CD4-positive, alpha-beta memory T cell (primary cell): ENCODE measurements at regions of chr7 and their contacts with region 1.

Region 1: GRCh38 chr7:129611246-129612111 is at the start of gene NRF1:
- DNase-seq: peak; percentile 90 to 93 (median 93)
- H3K4me3 ChIP-seq: peak within 1 kb of the TSS; percentile 95 to 98
- H3K4me3 Mint-ChIP-seq: peak within 1 kb of the TSS; percentile 94 to 99 (median 98)
- H3K27ac ChIP-seq: peak within 1 kb of the TSS; percentile 79
- H3K27ac Mint-ChIP-seq: peak within 1 kb of the TSS; percentile 92 to 98 (median 97)
- H3K4me1 ChIP-seq: peaks cover 45% of the 10 kb centered on the region
- H3K4me1 Mint-ChIP-seq: peaks cover 38 to 69% (median 55%) of the 10 kb centered on the region in 4 donors
- H3K27me3 ChIP-seq: no peaks in the 10 kb centered on the region
- H3K27me3 Mint-ChIP-seq: no peaks in the 10 kb centered on the region
- total RNA-seq, gene NRF1: 38.1 to 40.0 TPM

Region 2: GRCh38 chr7:129433847-129434674 is 177.4 kb before region 1 on chr7 and contains the start of gene STRIP2:
- CTCF ChIA-PET with region 1: no interaction called
- POLR2A ChIA-PET with region 1: interaction called, 3 read pairs
- intact Hi-C with region 1: loop called (anchors 5 kb)
- DNase-seq: peak; percentile 84 to 90 (median 87)
- H3K4me3 ChIP-seq: peak within 1 kb of the TSS; percentile 85 to 92
- H3K4me3 Mint-ChIP-seq: peak within 1 kb of the TSS; percentile 92 to 98 (median 94)
- H3K27ac ChIP-seq: no peak within 1 kb of the TSS
- H3K27ac Mint-ChIP-seq: peak within 1 kb of the TSS; percentile 37 to 85 (median 71)
- H3K4me1 ChIP-seq: peaks cover 17% of the 10 kb centered on the region
- H3K4me1 Mint-ChIP-seq: peaks cover 3 to 21% (median 15%) of the 10 kb centered on the region in 4 donors
- H3K27me3 ChIP-seq: no peaks in the 10 kb centered on the region
- H3K27me3 Mint-ChIP-seq: peaks cover 5 to 25% of the 10 kb centered on the region in 2 donors
- total RNA-seq, gene STRIP2: 0.20 to 0.22 TPM

Region 3: GRCh38 chr7:129453510-129454248 is 157.8 kb before region 1 on chr7:
- CTCF ChIA-PET with region 1: no interaction called
- POLR2A ChIA-PET with region 1: no interaction called
- intact Hi-C with region 1: no loop called
- DNase-seq: no peak
- H3K4me3 ChIP-seq: no peak overlapping the region
- H3K4me3 Mint-ChIP-seq: no peak overlapping the region
- H3K27ac ChIP-seq: no peak overlapping the region
- H3K27ac Mint-ChIP-seq: no peak overlapping the region
- H3K4me1 ChIP-seq: no peaks in the 10 kb centered on the region
- H3K4me1 Mint-ChIP-seq: no peaks in the 10 kb centered on the region
- H3K27me3 ChIP-seq: no peaks in the 10 kb centered on the region
- H3K27me3 Mint-ChIP-seq: no peaks in the 10 kb centered on the region

Region 4: DNA sequence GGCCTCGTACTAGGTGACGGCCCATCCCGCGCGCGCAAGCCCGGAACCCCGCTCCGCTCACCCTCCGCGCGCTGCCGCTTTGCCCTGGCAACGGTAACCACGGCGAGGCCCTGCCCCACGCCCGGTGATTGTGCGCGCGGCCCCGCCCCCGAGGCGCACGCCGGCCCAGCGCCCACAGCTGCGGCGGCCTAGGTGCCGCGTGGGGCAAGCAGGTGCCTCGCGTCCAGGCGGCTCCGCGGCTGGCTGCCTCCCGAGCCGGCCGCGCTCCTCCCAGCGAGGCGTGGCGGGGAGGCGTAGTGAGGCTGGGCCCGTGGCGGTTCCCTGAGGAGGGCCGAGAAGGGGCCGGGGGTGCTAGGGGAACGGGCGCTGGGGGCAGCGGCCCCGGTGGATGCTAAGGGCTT is 109.1 kb before region 1 on chr7 and contains the start of gene SMKR1:
- CTCF ChIA-PET with region 1: interaction called, 3 read pairs
- POLR2A ChIA-PET with region 1: interaction called, 11 read pairs
- intact Hi-C with region 1: loop called (anchors 1 kb)
- DNase-seq: peak; percentile 93 to 96 (median 96)
- H3K4me3 ChIP-seq: peak within 1 kb of the TSS; percentile 18 to 55
- H3K4me3 Mint-ChIP-seq: peak within 1 kb of the TSS; percentile 85 to 91 (median 88)
- H3K27ac ChIP-seq: peak within 1 kb of the TSS; percentile 66
- H3K27ac Mint-ChIP-seq: peak within 1 kb of the TSS; percentile 87 to 97 (median 93)
- H3K4me1 ChIP-seq: peaks cover 6% of the 10 kb centered on the region
- H3K4me1 Mint-ChIP-seq: peaks cover 6 to 18% (median 12%) of the 10 kb centered on the region in 4 donors
- H3K27me3 ChIP-seq: no peaks in the 10 kb centered on the region
- H3K27me3 Mint-ChIP-seq: no peaks in the 10 kb centered on the region
- total RNA-seq, gene SMKR1: 1.2 to 1.5 TPM

Region 5: DNA sequence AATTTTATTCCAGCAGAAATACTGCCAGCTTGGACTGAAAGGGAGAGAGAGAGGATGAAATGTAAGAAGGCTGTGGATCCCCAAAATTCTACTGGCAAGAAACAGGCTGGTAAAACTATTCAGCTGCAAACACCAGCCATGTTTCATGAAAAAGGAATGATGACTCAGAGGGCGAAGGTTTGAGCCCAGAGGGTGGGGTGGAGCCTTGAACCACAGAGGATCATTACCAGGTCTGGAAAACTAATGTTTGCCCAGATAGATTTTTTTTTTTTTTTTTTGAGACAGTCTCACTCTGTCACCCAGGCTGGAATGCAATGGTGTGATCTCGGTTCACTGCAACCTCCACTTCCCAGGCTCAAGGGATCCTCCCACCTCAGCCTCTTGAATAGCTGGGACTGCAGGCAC is 41.7 kb before region 1 on chr7:
- CTCF ChIA-PET with region 1: no interaction called
- POLR2A ChIA-PET with region 1: no interaction called
- intact Hi-C with region 1: no loop called
- DNase-seq: no peak
- H3K4me3 ChIP-seq: no peak overlapping the region
- H3K4me3 Mint-ChIP-seq: no peak overlapping the region
- H3K27ac ChIP-seq: no peak overlapping the region
- H3K27ac Mint-ChIP-seq: no peak overlapping the region
- H3K4me1 ChIP-seq: no peaks in the 10 kb centered on the region
- H3K4me1 Mint-ChIP-seq: peaks cover 0 to 2% (median 0%) of the 10 kb centered on the region in 4 donors
- H3K27me3 ChIP-seq: peaks cover 3% of the 10 kb centered on the region
- H3K27me3 Mint-ChIP-seq: peaks cover 10 to 17% of the 10 kb centered on the region in 2 donors

Region 6: DNA sequence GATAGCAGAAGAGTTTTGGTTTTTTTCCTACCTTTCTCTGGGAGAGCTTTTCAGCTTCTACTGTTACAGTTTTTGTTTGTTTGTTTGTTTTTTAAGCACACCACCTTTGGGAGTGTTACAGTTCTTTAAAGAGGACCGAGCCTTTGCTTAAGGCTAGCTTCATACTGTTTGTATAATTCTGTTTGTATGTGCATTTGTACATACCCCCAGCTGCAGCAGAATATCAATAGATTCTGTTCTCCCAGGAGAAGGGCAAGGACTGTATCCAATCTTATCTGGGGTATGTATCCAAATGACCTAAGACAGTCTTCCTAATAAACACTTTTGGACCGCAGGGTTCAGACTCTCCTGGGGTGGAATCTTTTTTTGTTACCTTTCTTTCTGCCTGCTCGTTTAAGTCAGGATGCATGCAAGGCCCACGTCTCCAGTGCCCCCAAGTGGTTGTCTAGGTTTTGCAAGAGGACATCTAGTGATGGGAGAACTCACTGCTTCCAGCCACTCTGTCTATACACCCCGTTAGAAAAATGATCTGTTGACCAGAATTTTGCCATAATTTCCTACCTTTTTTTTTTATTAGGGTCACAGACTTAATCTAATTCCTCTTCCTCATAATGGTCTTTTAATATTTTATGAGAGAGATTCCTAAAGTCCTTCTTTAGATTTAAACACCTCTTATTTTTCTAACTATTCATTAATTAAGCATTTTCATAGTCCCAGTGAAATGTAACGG is 24.0 kb after region 1 on chr7:
- CTCF ChIA-PET with region 1: interaction called, 9 read pairs
- POLR2A ChIA-PET with region 1: no interaction called
- intact Hi-C with region 1: loop called (anchors 1 kb)
- DNase-seq: peak; percentile 58 to 70 (median 63)
- H3K4me3 ChIP-seq: no peak overlapping the region
- H3K4me3 Mint-ChIP-seq: peak overlapping the region in 1 of 8 donors; percentile 21
- H3K27ac ChIP-seq: no peak overlapping the region
- H3K27ac Mint-ChIP-seq: peak overlapping the region; percentile 5 to 73 (median 60)
- H3K4me1 ChIP-seq: peaks cover 8% of the 10 kb centered on the region
- H3K4me1 Mint-ChIP-seq: peaks cover 27 to 45% (median 30%) of the 10 kb centered on the region in 4 donors
- H3K27me3 ChIP-seq: no peaks in the 10 kb centered on the region
- H3K27me3 Mint-ChIP-seq: no peaks in the 10 kb centered on the region

Region 7: DNA sequence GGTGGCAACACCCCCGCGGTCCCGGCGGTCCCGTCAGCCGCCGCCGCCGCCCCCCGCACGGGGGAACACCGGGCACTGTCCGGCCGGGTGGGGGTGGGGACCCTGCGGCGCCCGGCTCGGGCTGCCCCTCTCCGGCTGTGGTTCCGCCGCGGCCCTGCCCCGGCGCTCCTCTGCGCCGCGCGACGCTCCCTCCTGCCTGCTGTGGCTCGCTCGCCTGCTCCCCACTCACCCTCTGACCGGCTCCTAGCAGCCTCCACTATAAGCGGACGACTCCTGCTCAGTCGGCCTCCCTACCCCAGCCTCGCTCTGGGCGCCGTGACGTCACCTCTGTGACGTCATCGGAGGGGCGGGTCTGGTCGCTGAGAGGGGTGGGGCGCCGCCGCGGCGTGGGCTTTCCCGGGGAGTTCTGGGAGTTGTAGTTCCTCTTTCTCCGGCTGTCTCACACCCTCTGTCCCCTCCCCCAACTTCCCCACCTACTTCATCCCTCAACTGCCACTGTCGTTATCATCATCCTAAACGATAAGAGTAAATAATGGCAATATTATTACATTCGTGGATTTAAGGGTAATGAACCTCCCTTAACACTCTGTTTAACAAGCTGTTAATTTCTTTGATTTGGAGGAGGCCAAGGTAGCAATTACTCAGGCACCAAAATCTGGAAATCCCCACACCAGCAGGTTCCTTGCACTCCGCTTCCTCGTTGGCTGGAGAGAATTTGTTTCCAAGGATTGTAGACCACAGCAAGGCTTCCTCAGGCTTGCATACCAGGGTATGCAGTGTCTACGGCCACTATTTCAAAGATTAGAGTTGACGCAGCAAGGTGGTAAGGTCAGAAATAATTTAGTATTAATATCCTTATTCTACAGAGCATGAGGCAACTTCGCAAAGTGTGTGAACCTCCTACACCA is 341.4 kb after region 1 on chr7 and contains the start of gene UBE2H:
- CTCF ChIA-PET with region 1: no interaction called
- POLR2A ChIA-PET with region 1: interaction called, 9 read pairs
- intact Hi-C with region 1: loop called (anchors 1 kb)
- DNase-seq: peak; percentile 83 to 89 (median 86)
- H3K4me3 ChIP-seq: peak within 1 kb of the TSS; percentile 53 to 85
- H3K4me3 Mint-ChIP-seq: peak within 1 kb of the TSS; percentile 95 to 100 (median 99)
- H3K27ac ChIP-seq: peak within 1 kb of the TSS; percentile 96
- H3K27ac Mint-ChIP-seq: peak within 1 kb of the TSS in 6 of 7 donors; percentile 94 to 100 (median 100)
- H3K4me1 ChIP-seq: peaks cover 42% of the 10 kb centered on the region
- H3K4me1 Mint-ChIP-seq: peaks cover 5 to 16% (median 7%) of the 10 kb centered on the region in 4 donors
- H3K27me3 ChIP-seq: no peaks in the 10 kb centered on the region
- H3K27me3 Mint-ChIP-seq: peaks cover 0 to 2% of the 10 kb centered on the region in 2 donors
- total RNA-seq, gene UBE2H: 42.6 to 43.8 TPM